Esophagus muscularis mucosa (tissue), 4 donors: ENCODE measurements at regions of chr15 and their contacts with region 1.

Region 1: GRCh38 chr15:85330901-85331588 is 49.4 kb upstream of the AKAP13 start:
- DNase-seq: peak; percentile 97
- H3K4me3 ChIP-seq: peak overlapping the region in 1 of 4 donors; percentile 17
- H3K27ac ChIP-seq: peak overlapping the region; percentile 90 to 93 (median 90)
- H3K4me1 ChIP-seq: peaks cover 26 to 47% (median 33%) of the 10 kb centered on the region in 4 donors
- H3K27me3 ChIP-seq: no peaks in the 10 kb centered on the region
- CTCF ChIP-seq: peak; percentile 88 to 96 (median 92)
- EP300 ChIP-seq: peak; percentile 90
- POLR2A ChIP-seq: no peak

Region 2: GRCh38 chr15:85059734-85060133 is 271.3 kb before region 1 on chr15:
- intact Hi-C with region 1: no loop called
- DNase-seq: no peak
- H3K4me3 ChIP-seq: no peak overlapping the region
- H3K27ac ChIP-seq: no peak overlapping the region
- H3K4me1 ChIP-seq: peaks cover 0 to 14% (median 5%) of the 10 kb centered on the region in 4 donors
- H3K27me3 ChIP-seq: no peaks in the 10 kb centered on the region
- CTCF ChIP-seq: no peak
- EP300 ChIP-seq: no peak
- POLR2A ChIP-seq: no peak

Region 3: GRCh38 chr15:85380217-85380811 is 49.3 kb after region 1 on chr15 and contains the start of gene AKAP13:
- intact Hi-C with region 1: loop called (anchors 5 kb)
- DNase-seq: peak; percentile 98
- H3K4me3 ChIP-seq: peak within 1 kb of the TSS; percentile 89 to 98 (median 94)
- H3K27ac ChIP-seq: peak within 1 kb of the TSS; percentile 98 to 99 (median 98)
- H3K4me1 ChIP-seq: peaks cover 15 to 42% (median 40%) of the 10 kb centered on the region in 4 donors
- H3K27me3 ChIP-seq: no peaks in the 10 kb centered on the region
- CTCF ChIP-seq: no peak
- EP300 ChIP-seq: no peak
- POLR2A ChIP-seq: peak; percentile 94
- total RNA-seq, gene AKAP13: 232 to 323 (median 284) TPM

Region 4: DNA sequence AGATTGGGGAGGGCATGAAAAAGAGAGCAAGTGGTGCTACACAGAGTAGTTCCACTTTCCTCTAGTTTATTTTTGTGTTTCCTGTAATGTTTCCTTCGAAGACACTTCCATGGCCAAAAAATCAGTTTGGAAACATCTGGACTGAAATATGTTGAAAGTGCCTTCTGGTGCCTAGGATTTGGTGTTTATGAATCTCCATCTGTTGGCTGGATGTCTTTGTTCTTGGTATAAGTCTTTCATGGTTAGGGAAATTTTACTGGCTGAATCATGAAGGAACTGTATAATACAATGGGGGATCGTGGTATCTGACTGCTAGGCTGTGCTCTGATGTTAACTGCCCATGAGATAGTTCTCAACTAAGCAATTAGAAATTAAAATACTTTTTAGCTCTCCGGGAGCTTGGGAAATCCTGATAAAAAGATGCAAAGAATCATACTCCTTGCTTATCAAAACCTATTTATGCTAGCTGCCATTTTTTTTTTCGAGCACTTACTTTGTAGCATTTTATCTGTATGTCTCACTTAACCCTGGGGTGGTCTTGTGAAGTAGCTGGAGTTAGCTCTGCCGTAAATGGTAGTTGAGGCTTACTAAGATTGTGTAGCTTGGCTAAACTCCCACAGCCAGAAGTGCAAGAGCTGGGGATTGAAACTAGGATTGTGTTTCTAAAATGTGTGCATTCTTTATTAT is 71.3 kb after region 1 on chr15:
- intact Hi-C with region 1: no loop called
- DNase-seq: no peak
- H3K4me3 ChIP-seq: no peak overlapping the region
- H3K27ac ChIP-seq: peak overlapping the region; percentile 52 to 74 (median 60)
- H3K4me1 ChIP-seq: peaks cover 77 to 92% (median 86%) of the 10 kb centered on the region in 4 donors
- H3K27me3 ChIP-seq: no peaks in the 10 kb centered on the region
- CTCF ChIP-seq: no peak
- EP300 ChIP-seq: no peak
- POLR2A ChIP-seq: no peak

Region 5: GRCh38 chr15:85412956-85413854 is 82.2 kb after region 1 on chr15:
- intact Hi-C with region 1: loop called (anchors 5 kb)
- DNase-seq: no peak
- H3K4me3 ChIP-seq: peak overlapping the region in 2 of 4 donors; percentile 3 to 11
- H3K27ac ChIP-seq: peak overlapping the region; percentile 65 to 76 (median 70)
- H3K4me1 ChIP-seq: peaks cover 27 to 88% (median 77%) of the 10 kb centered on the region in 4 donors
- H3K27me3 ChIP-seq: no peaks in the 10 kb centered on the region
- CTCF ChIP-seq: peak in 1 of 3 experiments; percentile 27
- EP300 ChIP-seq: no peak
- POLR2A ChIP-seq: no peak

Region 6: DNA sequence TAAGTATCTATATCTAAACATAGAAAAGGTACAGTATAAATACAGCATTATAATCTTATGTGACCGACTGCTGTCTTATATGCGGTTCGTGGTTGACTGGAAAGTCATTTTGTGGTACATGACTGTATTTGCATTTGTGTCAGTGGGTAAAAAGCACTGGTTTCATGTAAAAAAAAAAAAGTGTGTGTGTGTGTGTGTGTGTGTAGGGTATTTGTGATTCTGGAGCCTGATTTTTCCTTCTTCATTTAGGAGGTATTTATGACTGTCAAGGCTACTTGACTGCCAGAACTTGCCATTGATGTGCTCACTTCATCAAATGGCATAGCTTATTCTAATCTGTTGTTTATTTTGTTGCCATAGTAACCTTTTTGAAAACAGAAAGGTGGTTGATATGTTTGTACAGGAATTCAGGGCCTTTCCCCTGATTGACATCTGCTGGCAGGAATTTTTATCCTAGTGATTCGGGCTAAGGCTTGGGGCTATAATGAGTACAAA is 112.6 kb after region 1 on chr15:
- intact Hi-C with region 1: no loop called
- DNase-seq: no peak
- H3K4me3 ChIP-seq: no peak overlapping the region
- H3K27ac ChIP-seq: peak overlapping the region; percentile 24 to 56 (median 42)
- H3K4me1 ChIP-seq: peaks cover 31 to 55% (median 54%) of the 10 kb centered on the region in 4 donors
- H3K27me3 ChIP-seq: no peaks in the 10 kb centered on the region
- CTCF ChIP-seq: no peak
- EP300 ChIP-seq: no peak
- POLR2A ChIP-seq: no peak

Region 7: DNA sequence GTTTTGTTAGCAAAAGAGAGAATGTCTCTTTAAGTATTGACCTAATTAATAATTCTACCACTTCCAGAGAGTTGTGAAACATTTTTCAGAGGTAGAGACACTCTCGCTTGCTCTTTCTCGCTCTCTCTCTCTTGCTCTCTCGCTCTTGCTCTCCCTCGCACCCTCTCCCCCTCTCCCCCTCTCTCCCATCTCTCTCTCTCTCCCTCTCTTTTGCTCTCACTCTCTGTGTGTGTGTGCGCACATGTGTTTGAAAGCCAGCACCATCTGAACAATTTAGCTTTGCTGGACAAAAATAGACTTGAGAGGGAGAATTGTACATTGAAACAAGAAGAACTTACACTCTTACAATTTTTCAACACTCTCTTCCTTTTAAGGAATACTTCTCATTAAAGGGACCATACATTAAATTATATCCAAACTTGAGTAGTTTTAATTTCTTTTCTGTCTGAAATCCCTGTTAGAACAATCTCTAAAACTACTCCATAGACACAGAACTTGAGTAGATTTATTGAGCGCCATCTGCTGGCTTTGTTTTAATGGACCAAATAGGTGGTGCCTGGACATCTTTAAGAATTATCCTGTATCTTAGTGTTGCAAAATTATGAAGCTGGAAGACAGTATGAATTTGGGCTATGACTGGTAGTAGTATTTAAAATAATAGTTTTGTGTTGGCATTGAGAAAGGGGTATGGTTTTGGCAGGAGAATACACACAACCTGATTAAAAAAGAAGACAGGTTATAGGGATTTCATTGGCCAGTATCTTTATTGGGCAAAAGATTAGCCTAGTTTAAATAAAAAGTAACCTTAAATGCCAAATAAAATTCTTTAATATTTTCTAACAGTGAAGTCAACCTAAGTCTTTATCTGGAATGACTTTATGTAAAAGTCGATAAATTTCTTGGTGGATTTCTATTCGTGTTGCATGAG is 174.0 kb after region 1 on chr15:
- intact Hi-C with region 1: loop called (anchors 10 kb)
- DNase-seq: no peak
- H3K4me3 ChIP-seq: peak overlapping the region in 1 of 4 donors; percentile 30
- H3K27ac ChIP-seq: peak overlapping the region; percentile 66 to 78 (median 72)
- H3K4me1 ChIP-seq: peaks cover 29 to 81% (median 60%) of the 10 kb centered on the region in 4 donors
- H3K27me3 ChIP-seq: no peaks in the 10 kb centered on the region
- CTCF ChIP-seq: peak; percentile 53 to 61 (median 56)
- EP300 ChIP-seq: no peak
- POLR2A ChIP-seq: no peak

Region 8: DNA sequence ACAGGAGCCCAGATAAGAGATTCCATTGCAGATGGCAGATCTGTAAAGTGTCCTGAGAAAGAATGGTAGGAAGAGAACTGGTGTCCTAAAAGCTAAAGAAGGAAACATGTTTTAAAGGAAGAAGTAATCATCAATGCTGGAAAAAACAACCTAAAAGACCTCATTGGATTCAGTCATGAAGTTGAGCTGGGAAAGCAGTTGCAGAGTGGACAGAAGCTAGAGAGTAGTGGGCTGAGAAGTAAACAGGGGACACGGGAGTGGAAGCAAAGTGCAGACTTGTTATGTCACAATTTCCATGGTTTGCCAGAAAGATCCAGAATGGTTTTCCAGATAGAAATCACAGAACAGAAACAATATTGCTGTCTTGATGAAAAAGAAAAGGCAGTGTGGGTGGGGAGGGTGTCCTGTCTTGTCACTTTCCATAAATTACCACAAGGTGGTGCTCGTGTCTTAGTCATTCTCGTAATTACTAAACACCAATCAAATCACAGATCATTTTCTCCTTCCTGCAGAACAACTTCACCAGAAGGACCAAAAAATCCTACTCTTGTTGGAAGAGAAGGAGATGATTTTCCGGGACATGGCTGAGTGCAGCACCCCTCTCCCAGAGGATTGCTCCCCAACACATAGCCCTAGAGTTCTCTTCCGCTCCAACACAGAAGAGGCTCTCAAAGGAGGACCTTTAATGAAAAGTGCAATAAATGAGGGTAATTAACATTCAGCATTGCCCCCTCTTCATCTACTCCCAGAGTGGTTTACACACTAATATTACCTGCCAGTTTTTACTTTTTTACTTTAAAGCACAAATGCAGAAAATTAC is 399.2 kb after region 1 on chr15:
- intact Hi-C with region 1: loop called (anchors 10 kb)
- DNase-seq: no peak
- H3K4me3 ChIP-seq: no peak overlapping the region
- H3K27ac ChIP-seq: peak overlapping the region; percentile 82 to 88 (median 86)
- H3K4me1 ChIP-seq: peaks cover 24 to 55% (median 53%) of the 10 kb centered on the region in 4 donors
- H3K27me3 ChIP-seq: no peaks in the 10 kb centered on the region
- CTCF ChIP-seq: peak; percentile 77 to 83 (median 81)
- EP300 ChIP-seq: no peak
- POLR2A ChIP-seq: no peak